Right ventricle myocardium superior (tissue), 1 donor: ENCODE measurements at regions of chr2 and their contacts with region 1.

Region 1: GRCh38 chr2:178271629-178272333 is 77.5 kb downstream of the OSBPL6 start:
- DNase-seq: peak; percentile 89
- ATAC-seq: peak; percentile 96

Region 2: DNA sequence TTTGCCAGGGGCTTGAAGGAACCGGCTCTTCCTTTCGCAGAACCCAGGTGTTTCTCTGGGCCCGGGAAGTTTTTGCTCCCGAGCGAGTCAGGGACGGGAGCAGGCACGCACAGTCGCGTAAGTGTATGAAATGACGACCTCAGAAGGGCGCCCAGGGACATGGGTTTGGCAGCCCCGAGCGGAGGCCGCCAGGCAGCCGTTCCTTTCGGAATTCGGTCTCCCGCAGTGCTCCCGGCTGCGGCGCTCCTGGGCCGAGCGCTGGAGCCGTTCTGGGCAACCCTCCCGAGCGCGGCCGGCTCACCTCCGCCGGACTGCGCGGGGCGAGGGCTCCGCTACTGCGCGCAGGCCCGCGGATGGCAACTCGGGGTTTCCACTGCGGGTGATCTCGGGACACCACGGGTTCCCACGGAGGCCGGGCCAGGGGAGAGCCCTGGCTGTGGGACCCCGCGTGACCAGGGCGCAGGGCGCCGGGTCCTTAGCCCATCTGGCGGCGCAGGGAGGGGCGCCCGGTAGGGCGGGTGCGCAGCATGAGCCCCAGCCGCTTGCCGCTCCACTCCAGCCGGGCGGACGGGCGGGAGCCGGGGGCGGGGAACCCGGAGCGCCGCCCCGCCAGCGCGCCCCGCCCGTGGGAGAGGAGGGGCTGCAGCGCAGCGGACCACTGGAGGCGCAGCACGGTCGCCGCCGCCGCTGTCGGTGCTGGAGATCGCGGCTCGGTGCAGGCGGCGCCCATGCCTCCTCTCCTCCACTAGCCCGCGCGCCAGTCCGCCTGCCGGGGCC is 77.8 kb before region 1 on chr2 and contains the start of gene OSBPL6:
- intact Hi-C with region 1: loop called (anchors 5 kb)
- DNase-seq: peak; percentile 90
- ATAC-seq: peak; percentile 98
- total RNA-seq, gene OSBPL6: 3.3 TPM

Region 3: GRCh38 chr2:178589337-178589736 is 317.6 kb after region 1 on chr2:
- intact Hi-C with region 1: no loop called
- DNase-seq: no peak
- ATAC-seq: peak; percentile 3